Posterior vena cava (tissue), 2 donors: ENCODE measurements at regions of chr1 and their contacts with region 1.

Region 1: GRCh38 chr1:85245891-85246290 is 13.6 kb downstream of the C1orf52 start:
- DNase-seq: no peak

Region 2: GRCh38 chr1:85166351-85166750 is 79.5 kb before region 1 on chr1:
- intact Hi-C with region 1: no loop called
- DNase-seq: no peak

Region 3: GRCh38 chr1:85229574-85230097 is 16.3 kb before region 1 on chr1:
- intact Hi-C with region 1: loop called in 1 of 2 experiments (anchors 2 kb)
- DNase-seq: no peak

Region 4: GRCh38 chr1:85313888-85314696 is 68.2 kb after region 1 on chr1:
- intact Hi-C with region 1: no loop called
- DNase-seq: no peak